Tibial artery (tissue), 4 donors: ENCODE measurements at regions of chr7 and their contacts with region 1.

Region 1: GRCh38 chr7:24477398-24478136 is 95.7 kb upstream of the PALS2 start:
- DNase-seq: peak; percentile 68 to 76
- H3K4me3 ChIP-seq: peak overlapping the region; percentile 3 to 15
- H3K27ac ChIP-seq: peak overlapping the region; percentile 48 to 75
- H3K4me1 ChIP-seq: peaks cover 0 to 32% (median 15%) of the 10 kb centered on the region in 4 donors
- H3K27me3 ChIP-seq: no peaks in the 10 kb centered on the region
- CTCF ChIP-seq: no peak

Region 2: DNA sequence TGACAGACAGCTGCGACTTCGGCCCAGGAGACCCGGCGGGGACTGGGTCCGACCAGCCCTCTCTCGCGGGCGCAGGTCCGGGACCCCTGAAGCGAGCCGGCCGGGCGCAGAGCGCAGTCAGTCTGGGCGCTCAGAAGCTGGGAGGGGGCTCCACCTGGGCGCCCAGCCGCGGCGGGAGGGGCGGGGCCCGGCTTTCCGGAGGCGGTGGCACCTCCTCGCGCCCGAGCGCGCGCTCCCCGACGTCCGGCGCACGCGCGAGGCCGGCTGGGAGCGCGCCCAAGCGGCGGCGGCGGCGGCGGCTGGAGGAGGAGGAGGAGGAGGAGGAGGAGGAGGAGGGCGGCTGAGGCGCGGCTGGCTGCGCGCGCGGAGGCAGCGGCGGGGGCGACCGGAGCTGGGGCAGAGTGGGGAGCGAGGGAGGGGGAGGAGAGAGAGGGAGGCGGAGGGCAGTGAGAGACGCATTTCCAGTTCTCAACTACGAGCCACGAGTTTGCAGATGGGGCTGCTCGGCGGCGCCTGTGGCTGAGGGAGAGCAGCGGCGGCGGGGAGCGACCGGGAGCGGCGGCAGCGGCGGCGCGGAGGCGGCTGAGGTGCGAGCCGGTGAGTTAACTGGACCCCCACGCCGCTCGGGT is 95.5 kb after region 1 on chr7 and contains the start of gene PALS2:
- intact Hi-C with region 1: loop called (anchors 5 kb)
- DNase-seq: peak; percentile 42 to 84
- H3K4me3 ChIP-seq: peak within 1 kb of the TSS; percentile 86 to 93
- H3K27ac ChIP-seq: peak within 1 kb of the TSS; percentile 87 to 89
- H3K4me1 ChIP-seq: peaks cover 0 to 13% (median 7%) of the 10 kb centered on the region in 4 donors
- H3K27me3 ChIP-seq: no peaks in the 10 kb centered on the region
- CTCF ChIP-seq: no peak

Region 3: GRCh38 chr7:25288556-25289307 is 811.2 kb after region 1 on chr7:
- intact Hi-C with region 1: no loop called
- DNase-seq: peak in 1 of 2 donors; percentile 64
- H3K4me3 ChIP-seq: no peak overlapping the region
- H3K27ac ChIP-seq: peak overlapping the region in 1 of 2 donors; percentile 28
- H3K4me1 ChIP-seq: peaks cover 0 to 11% (median 5%) of the 10 kb centered on the region in 4 donors
- H3K27me3 ChIP-seq: no peaks in the 10 kb centered on the region
- CTCF ChIP-seq: no peak